Activated CD8-positive, alpha-beta T cell treated with anti-CD3 and anti-CD28 coated beads for 36 hours (primary cell): ENCODE measurements at regions of chr14 and their contacts with region 1.

Region 1: DNA sequence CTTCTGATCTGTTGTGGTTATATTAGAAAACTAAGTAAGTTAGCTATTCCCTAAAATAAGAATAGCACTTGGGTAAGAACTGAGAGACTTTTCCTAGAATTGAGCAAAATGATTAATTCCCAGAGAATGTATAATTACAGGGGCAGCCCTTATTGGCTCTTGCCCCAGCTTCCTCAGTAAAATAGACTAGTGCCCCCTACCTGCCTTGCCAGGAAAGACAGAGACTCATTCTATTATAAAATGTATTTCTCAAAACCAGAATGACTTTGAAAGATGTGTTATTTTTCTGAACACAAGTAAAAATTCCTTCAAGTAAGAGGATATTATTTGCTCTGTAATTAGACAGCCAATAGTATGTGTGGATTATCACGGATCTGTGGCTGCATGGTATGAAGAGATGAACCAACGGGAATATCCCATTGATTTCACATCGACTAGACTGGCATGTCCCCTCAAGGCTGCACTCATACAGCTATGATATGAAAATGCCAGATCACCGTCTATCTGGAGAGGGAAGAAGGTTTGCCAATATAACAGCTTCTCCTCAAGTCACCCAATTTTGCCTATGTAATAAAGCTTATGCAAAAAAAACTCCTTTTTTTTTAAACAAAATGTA is 7.4 kb upstream of the GLRX5 start:
- DNase-seq: peak; percentile 80
- ATAC-seq: no peak
- H3K4me3 Mint-ChIP-seq: peak overlapping the region; percentile 27
- H3K27ac Mint-ChIP-seq: peak overlapping the region; percentile 100
- H3K4me1 Mint-ChIP-seq: peaks cover 79% of the 10 kb centered on the region
- H3K27me3 Mint-ChIP-seq: no peaks in the 10 kb centered on the region
- CTCF ChIP-seq: peak; percentile 95

Region 2: DNA sequence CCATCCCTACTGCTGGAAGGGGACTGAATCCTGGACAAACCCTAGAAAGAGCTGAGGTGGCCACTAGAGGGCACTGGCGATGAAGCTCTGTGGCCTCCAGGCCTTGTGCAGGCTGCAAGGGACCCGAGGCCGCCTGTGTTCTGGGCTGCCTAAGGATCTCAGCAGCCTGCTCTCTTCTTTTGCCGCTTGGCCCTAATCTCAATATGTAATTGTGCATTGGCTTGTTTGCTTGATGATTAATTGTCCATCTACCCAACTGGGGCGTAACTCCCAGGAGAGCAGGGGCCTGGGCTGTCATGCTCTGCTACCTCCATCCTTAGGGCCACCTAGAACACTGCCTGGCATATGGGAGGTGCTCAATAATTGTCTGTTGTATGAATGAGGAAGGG is 84.9 kb before region 1 on chr14:
- CTCF ChIA-PET with region 1: interaction called, 188 read pairs
- POLR2A ChIA-PET with region 1: interaction called, 9 read pairs
- intact Hi-C with region 1: loop called (anchors 1 kb)
- DNase-seq: peak; percentile 84
- ATAC-seq: peak; percentile 95
- H3K4me3 Mint-ChIP-seq: no peak overlapping the region
- H3K27ac Mint-ChIP-seq: peak overlapping the region; percentile 2
- H3K4me1 Mint-ChIP-seq: peaks cover 4% of the 10 kb centered on the region
- H3K27me3 Mint-ChIP-seq: no peaks in the 10 kb centered on the region
- CTCF ChIP-seq: peak; percentile 79

Region 3: GRCh38 chr14:95460647-95461478 is 66.6 kb before region 1 on chr14:
- CTCF ChIA-PET with region 1: interaction called, 20 read pairs
- POLR2A ChIA-PET with region 1: interaction called, 4 read pairs
- intact Hi-C with region 1: no loop called
- DNase-seq: no peak
- ATAC-seq: no peak
- H3K4me3 Mint-ChIP-seq: no peak overlapping the region
- H3K27ac Mint-ChIP-seq: no peak overlapping the region
- H3K4me1 Mint-ChIP-seq: peaks cover 32% of the 10 kb centered on the region
- H3K27me3 Mint-ChIP-seq: no peaks in the 10 kb centered on the region
- CTCF ChIP-seq: no peak

Region 4: DNA sequence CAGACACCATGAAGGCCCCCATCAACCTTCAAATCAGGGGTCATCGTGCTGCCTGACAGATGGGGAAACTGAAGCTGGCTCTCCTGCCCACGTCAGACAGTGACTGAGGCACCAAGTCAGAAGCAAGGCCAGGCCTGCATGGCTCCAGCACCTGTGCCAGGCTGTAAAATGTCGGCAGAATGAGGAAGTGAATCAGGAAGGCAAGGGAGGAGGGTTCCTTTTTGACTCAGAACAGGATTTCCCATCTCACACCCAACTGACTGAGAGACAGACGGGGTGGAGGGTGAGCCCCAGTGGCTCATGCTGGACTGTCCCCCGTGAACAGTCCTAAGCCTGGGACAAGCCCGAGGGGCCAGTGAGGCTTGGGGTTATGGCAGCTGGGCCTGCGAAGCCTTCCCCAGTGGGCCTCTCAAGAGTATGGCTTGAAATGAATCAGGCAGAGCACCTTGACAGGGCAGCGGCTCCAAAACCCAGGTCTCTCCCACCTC is 31.9 kb before region 1 on chr14:
- CTCF ChIA-PET with region 1: interaction called, 5 read pairs
- POLR2A ChIA-PET with region 1: interaction called, 13 read pairs
- intact Hi-C with region 1: no loop called
- DNase-seq: peak; percentile 41
- ATAC-seq: peak; percentile 66
- H3K4me3 Mint-ChIP-seq: no peak overlapping the region
- H3K27ac Mint-ChIP-seq: peak overlapping the region; percentile 82
- H3K4me1 Mint-ChIP-seq: peaks cover 56% of the 10 kb centered on the region
- H3K27me3 Mint-ChIP-seq: no peaks in the 10 kb centered on the region
- CTCF ChIP-seq: no peak

Region 5: DNA sequence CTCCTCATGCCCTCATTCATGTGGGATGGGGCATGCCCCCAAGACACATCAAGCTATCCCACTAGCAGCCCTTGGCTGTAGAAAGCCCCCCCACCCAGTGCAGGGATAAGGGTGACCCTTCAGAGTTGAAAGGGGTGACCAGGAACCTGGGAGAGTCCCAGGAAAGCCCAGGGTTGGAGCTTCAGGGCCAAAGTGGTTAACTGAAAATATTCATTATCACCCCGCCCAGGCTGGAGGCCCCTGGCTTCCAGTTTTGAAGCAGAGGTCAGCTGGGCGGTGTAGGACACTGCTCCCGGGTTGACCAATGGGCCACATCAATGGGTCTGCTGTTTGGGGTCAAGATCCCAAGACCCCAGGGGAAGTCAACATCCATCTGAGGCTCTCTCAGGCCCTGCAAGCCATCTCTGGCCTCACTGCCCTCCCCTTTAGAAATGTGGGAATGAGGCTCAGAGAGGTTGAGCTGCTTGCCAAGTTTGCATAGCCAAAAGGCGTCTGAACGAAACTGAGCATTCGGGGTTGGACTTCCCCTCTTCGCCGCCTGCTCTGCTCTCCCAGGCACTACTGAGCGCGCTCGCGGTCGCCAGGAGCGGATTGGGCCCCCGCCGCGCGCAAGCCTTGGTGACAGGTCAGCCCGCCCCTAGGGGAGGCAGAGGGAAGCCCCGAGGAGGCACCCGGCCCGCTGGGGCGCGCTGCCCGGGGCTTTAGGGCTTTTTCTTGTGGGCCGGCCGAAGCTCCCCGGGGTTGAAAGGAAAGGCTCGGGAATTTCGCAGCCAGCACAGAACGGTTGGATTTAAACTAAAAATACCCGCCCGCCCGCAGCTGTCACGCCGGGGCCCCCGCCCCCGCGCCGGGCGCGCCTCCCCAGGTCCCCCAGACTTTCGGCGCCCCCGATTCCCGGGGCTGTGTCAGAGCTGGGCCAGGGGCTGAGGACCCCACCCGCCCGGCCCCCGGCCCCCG is 11.6 kb before region 1 on chr14:
- CTCF ChIA-PET with region 1: interaction called, 59 read pairs
- POLR2A ChIA-PET with region 1: interaction called, 12 read pairs
- intact Hi-C with region 1: no loop called
- DNase-seq: peak; percentile 92
- ATAC-seq: peak; percentile 85
- H3K4me3 Mint-ChIP-seq: peak overlapping the region; percentile 93
- H3K27ac Mint-ChIP-seq: peak overlapping the region; percentile 92
- H3K4me1 Mint-ChIP-seq: peaks cover 67% of the 10 kb centered on the region
- H3K27me3 Mint-ChIP-seq: no peaks in the 10 kb centered on the region
- CTCF ChIP-seq: peak; percentile 54